ENCODE measurements at regions of chr1 and their contacts with region 1.

Region 1: GRCh38 chr1:8987881-8988617 is 38.2 kb downstream of the SLC2A7 start:
- DNase-seq: peak; percentile 86
- ATAC-seq: peak; percentile 86

Region 2: DNA sequence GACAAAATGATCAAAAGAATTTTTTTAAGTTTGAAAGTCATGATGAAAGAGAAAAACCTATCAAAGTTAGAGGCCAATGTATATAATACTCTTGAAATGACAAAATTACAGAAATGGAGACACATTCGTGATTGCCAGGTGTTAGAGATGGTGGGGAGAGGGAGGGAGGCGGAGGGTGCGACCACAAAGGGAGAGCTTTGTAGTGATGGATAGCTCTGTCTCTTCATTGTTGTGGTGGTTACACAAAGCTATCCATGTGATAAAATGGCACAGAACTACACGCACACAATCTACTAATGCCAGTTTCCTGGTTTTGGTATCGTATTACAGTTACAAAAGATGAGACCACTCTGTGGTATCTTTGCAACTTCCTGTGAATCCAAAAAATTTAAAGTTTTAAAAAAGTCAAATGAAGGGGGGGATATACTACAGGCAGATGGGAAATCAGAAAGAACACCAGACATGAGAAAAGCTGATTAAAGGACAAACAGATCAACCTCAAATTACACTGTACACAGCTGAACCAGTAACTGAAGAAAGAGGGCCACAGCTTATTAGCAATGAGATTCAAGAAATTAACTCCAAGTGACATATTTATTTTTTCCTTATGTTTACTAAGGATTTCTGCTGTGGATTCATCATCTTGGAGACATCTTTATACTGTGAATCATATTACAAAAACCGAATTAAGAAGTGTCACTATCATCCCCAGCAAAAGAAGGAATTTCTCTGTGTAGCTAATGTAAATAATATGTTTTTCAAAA is 471.1 kb before region 1 on chr1:
- intact Hi-C with region 1: no loop called
- DNase-seq: no peak
- ATAC-seq: no peak

Region 3: DNA sequence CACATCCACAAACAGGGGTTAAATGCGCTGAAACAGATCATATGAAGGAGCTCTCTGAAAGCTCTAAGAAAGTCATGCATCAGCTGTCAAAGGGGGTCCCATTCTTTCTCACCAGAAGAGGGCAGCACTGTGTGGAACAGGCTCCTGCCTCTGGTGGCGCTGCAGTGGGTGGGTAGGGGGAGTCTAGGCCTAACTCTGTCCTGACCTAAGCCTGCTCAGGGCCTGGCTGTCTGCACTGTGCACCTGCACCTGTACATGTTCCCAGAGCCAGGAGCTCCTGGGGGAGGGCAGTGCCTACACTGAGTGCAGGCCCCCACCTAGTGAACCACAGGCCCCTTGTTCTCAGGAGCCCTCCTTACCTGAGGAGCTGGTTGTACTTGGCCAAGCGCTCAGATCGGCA is 125.5 kb before region 1 on chr1:
- intact Hi-C with region 1: loop called (anchors 5 kb)
- DNase-seq: no peak
- ATAC-seq: peak; percentile 14

Region 4: DNA sequence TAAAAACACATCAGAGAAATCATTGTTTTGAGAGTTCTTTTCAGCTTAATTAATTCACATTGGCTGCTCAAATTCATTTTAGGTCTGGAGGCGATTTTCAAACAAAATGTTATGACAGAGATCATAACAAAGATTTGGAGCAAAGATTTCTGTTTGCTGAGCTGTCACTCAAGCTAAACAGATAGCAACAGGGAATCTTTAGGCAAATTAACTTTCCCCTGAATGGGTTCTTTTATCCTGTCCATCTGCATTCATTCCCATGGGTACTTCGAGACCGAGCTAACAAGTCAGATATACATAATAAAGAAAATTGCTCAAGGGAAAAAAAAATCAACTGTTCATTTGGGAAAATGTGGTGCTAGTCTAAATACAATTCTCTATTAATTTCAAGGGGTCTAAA is 72.6 kb before region 1 on chr1:
- intact Hi-C with region 1: loop called (anchors 5 kb)
- DNase-seq: no peak
- ATAC-seq: no peak

Region 5: GRCh38 chr1:8962812-8963530 is 25.1 kb before region 1 on chr1:
- intact Hi-C with region 1: no loop called
- DNase-seq: no peak
- ATAC-seq: no peak

Measured in sciatic nerve (tissue), 2 donors.